ENCODE measurements at regions of chr12 and their contacts with region 1.

Region 1: DNA sequence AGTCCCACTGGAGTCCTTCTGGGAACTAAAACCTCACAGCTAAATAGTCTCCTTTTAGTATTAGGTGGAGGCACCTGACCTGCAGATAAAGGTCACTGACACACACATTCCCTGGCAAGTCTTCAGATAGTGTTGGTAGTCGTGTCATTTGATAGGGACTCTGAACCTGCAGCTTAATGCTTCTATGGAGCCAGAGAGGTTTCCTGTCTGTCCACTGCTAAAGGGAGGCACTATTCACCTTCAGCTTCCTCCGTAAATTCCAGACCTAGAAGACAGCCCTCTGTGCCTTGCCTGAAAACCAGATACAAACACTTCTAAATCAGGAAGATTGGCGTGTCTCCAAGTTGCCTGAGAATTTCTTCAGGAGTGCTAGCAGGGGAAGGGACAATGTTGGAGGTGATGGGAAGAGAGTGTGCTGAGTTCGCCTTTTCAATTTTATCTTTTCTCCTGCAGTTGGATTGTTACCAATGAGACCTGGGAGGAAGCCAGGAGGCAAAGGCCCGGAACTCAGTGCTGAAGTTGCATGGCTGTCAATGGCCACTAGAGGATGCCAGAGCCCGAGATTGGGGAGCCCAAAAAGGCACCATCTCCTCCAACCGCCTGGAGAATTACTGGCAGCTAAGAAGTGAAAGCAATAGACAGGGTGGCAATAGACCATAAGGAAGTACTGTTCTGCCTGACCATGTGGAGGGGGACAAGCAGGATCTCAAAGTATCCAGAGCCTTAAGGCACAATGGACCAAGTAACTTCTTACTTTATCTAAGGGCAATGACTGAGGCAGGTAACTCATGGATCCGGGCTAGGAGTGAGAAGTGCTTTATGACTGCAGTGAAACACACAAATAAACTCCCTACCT is 81.6 kb upstream of the SCAF11 start:
- DNase-seq: peak; percentile 80
- ATAC-seq: peak; percentile 98
- H3K4me3 Mint-ChIP-seq: no peak overlapping the region
- H3K27ac Mint-ChIP-seq: peak overlapping the region; percentile 47
- H3K4me1 Mint-ChIP-seq: peaks cover 3% of the 10 kb centered on the region
- H3K27me3 Mint-ChIP-seq: peaks cover 2% of the 10 kb centered on the region

Region 2: DNA sequence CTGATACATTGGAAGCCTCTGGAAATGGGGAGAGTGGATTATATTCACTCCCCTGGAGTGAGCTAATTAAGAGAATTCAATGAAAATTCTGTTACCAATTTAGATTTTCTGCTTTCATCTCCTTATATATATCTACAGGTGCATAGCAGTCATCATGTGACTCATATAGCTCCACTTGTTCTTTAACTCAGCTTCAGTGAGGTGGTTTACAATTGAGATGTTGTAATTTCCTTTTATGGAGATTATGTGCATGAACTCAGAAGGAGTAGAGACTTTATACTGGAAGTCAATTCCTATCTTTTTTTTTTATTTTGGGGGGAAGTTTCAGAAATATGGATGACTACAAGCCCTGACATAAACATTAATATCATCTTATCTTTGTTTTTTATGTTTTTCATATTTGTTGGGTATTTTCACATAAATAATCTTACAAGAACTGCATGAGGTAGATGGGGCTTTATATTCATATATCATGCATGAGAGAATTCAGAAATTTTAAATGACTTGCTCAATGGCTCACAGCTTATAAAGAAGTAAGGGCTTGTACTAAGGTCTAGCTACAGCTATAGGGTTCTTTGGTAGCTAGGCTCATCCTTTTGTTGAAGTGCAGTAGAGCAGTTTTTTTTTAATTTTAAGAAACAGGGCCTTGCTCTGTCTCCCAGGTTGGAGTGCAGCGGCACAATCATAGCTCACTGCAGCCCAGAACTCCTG is 10.6 kb after region 1 on chr12:
- CTCF ChIA-PET with region 1: interaction called, 19 read pairs
- POLR2A ChIA-PET with region 1: no interaction called
- intact Hi-C with region 1: no loop called
- DNase-seq: no peak
- ATAC-seq: peak; percentile 49
- H3K4me3 Mint-ChIP-seq: no peak overlapping the region
- H3K27ac Mint-ChIP-seq: no peak overlapping the region
- H3K4me1 Mint-ChIP-seq: no peaks in the 10 kb centered on the region
- H3K27me3 Mint-ChIP-seq: peaks cover 2% of the 10 kb centered on the region

Region 3: GRCh38 chr12:46198913-46199312 is 126.9 kb after region 1 on chr12:
- CTCF ChIA-PET with region 1: no interaction called
- POLR2A ChIA-PET with region 1: no interaction called
- intact Hi-C with region 1: no loop called
- DNase-seq: no peak
- ATAC-seq: no peak
- H3K4me3 Mint-ChIP-seq: no peak overlapping the region
- H3K27ac Mint-ChIP-seq: peak overlapping the region; percentile 56
- H3K4me1 Mint-ChIP-seq: peaks cover 12% of the 10 kb centered on the region
- H3K27me3 Mint-ChIP-seq: no peaks in the 10 kb centered on the region

Region 4: GRCh38 chr12:46303039-46303666 is 231.2 kb after region 1 on chr12:
- CTCF ChIA-PET with region 1: interaction called, 3 read pairs
- POLR2A ChIA-PET with region 1: no interaction called
- intact Hi-C with region 1: loop called in 1 of 2 experiments (anchors 5 kb)
- DNase-seq: peak; percentile 62
- ATAC-seq: peak; percentile 85
- H3K4me3 Mint-ChIP-seq: no peak overlapping the region
- H3K27ac Mint-ChIP-seq: no peak overlapping the region
- H3K4me1 Mint-ChIP-seq: no peaks in the 10 kb centered on the region
- H3K27me3 Mint-ChIP-seq: no peaks in the 10 kb centered on the region

Region 5: GRCh38 chr12:47021298-47021697 is 949.3 kb after region 1 on chr12:
- CTCF ChIA-PET with region 1: interaction called, 21 read pairs
- POLR2A ChIA-PET with region 1: no interaction called
- intact Hi-C with region 1: loop called (anchors 1 to 5 kb)
- DNase-seq: no peak
- ATAC-seq: peak; percentile 75
- H3K4me3 Mint-ChIP-seq: no peak overlapping the region
- H3K27ac Mint-ChIP-seq: no peak overlapping the region
- H3K4me1 Mint-ChIP-seq: peaks cover 3% of the 10 kb centered on the region
- H3K27me3 Mint-ChIP-seq: peaks cover 7% of the 10 kb centered on the region

Region 6: DNA sequence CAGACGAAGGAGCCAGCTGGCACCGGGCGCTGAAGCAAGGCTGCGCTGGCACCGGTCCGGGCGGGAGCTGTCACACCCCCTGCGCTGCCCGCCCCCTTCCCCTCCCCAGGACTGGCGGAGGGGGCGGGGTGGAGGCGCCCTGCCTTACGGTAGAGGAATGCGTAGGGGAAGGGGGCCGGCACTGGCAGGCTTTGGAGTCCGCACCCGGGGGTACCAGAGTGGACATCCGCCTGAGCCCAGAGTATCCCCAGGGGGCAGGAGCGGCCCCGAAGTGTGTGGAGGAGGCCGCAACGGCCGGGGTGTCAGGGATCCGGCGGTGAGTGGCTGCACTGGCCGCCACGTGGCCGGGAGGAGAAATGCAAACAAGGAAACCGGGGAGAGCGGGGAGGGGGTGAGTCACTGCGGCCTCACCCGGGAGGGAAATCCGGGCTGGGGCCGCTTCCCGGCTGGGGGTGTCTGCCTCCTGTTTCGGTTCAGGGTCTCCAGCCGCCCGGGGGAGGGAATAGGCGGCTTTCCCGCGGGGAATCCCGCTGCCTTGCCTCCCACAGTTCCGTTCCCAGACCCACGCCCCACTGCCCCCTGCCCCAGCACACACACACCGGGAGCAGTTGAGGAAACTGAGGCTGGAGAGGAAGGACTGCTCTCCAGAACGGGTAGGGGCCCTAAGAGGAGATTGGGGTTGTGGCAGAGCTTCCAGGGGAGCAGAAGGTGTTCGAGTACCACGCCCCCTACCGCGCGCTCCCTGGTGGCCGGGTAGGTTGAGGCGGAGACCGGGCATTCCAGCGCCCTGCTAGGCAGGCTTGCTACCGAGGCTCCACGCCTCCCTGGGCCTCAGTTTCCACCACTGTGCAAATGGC is 1687.1 kb after region 1 on chr12 and contains the start of gene RAPGEF3:
- CTCF ChIA-PET with region 1: no interaction called
- POLR2A ChIA-PET with region 1: no interaction called
- intact Hi-C with region 1: no loop called
- DNase-seq: peak; percentile 84
- ATAC-seq: peak; percentile 74
- H3K4me3 Mint-ChIP-seq: peak within 1 kb of the TSS; percentile 63
- H3K27ac Mint-ChIP-seq: no peak within 1 kb of the TSS
- H3K4me1 Mint-ChIP-seq: peaks cover 47% of the 10 kb centered on the region
- H3K27me3 Mint-ChIP-seq: no peaks in the 10 kb centered on the region
- total RNA-seq, gene RAPGEF3: 0.43 to 0.83 TPM

Measured in activated CD4-positive, alpha-beta T cell treated with anti-CD3 and anti-CD28 coated beads for 36 hours (primary cell).